ENCODE measurements at regions of chr1 and their contacts with region 1.

Region 1: GRCh38 chr1:167752219-167752985 is 30.6 kb downstream of the MPZL1 start:
- DNase-seq: no peak
- ATAC-seq: no peak
- H3K4me3 Mint-ChIP-seq: peak overlapping the region; percentile 77
- H3K27ac Mint-ChIP-seq: peak overlapping the region; percentile 84
- H3K4me1 Mint-ChIP-seq: peaks cover 80% of the 10 kb centered on the region
- H3K27me3 Mint-ChIP-seq: no peaks in the 10 kb centered on the region
- CTCF ChIP-seq: no peak

Region 2: DNA sequence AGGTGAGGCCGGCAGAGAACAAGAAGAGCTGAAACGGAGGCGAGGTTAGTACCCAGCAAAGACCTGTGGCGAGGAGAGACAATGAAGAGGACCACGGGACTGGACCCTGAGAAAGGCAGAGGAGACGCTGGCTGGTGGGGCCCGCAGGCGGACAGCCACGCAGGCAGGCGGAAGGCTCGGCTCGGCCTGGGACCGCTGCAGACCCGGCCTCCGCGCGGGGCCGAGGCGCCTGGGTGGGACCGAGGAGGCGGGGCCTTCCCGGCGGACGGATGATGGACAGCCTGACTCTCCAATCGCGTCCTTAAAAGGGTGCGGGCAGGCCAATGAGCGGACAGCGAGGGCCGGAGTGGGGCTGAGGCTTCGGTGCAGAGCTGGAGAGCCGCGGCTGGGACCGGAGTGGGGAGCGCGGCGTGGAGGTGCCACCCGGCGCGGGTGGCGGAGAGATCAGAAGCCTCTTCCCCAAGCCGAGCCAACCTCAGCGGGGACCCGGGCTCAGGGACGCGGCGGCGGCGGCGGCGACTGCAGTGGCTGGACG is 30.7 kb before region 1 on chr1 and contains the start of gene MPZL1:
- CTCF ChIA-PET with region 1: interaction called, 17 read pairs
- POLR2A ChIA-PET with region 1: interaction called, 8 read pairs
- intact Hi-C with region 1: loop called (anchors 1 kb)
- DNase-seq: peak; percentile 94
- ATAC-seq: peak; percentile 96
- H3K4me3 Mint-ChIP-seq: peak within 1 kb of the TSS; percentile 94
- H3K27ac Mint-ChIP-seq: peak within 1 kb of the TSS; percentile 96
- H3K4me1 Mint-ChIP-seq: peaks cover 77% of the 10 kb centered on the region
- H3K27me3 Mint-ChIP-seq: no peaks in the 10 kb centered on the region
- CTCF ChIP-seq: no peak
- total RNA-seq, gene MPZL1: 27.2 and 27.4 TPM in 2 replicates

Region 3: DNA sequence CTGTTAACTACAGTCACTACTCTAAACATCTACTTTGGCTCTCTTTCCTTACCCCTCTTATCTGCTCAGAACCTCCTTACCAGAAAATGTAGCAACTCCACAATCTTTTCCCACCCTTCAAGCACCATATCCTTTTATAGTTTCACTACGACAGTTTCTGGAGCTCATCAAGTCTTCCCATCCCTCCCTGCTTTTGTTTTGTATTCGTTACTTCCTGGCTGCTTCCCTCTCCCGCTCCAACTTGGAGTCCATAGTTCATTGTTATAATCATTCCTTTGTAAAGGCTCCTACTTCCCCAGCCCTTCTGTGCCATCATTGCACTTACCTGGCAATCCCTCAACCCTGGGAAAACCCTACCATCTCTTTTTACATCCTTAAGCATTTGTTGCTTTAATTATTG is 12.7 kb before region 1 on chr1:
- CTCF ChIA-PET with region 1: no interaction called
- POLR2A ChIA-PET with region 1: interaction called, 4 read pairs
- intact Hi-C with region 1: loop called (anchors 1 kb)
- DNase-seq: no peak
- ATAC-seq: no peak
- H3K4me3 Mint-ChIP-seq: no peak overlapping the region
- H3K27ac Mint-ChIP-seq: peak overlapping the region; percentile 19
- H3K4me1 Mint-ChIP-seq: peaks cover 26% of the 10 kb centered on the region
- H3K27me3 Mint-ChIP-seq: no peaks in the 10 kb centered on the region
- CTCF ChIP-seq: no peak

Region 4: DNA sequence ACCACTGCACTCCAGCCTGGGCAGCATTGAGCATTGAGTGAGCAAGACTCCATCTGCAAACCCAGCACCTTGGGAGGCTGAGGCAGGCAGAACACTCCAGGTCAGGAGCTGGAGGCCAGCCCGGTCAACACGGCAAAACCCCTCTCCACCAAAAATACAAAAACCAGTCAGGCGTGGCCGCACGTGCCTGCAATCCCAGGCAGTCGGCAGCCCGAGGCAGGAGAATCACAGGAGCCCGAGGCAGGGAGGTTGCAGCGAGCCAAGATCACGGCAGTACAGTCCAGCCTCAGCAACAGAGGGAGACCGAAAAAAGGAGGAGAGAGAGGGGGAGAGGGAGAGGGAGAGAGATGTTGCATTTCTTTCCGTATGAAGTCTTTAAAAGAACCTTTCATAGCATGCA is 19.4 kb after region 1 on chr1:
- CTCF ChIA-PET with region 1: interaction called, 4 read pairs
- POLR2A ChIA-PET with region 1: no interaction called
- intact Hi-C with region 1: loop called (anchors 2 kb)
- DNase-seq: no peak
- ATAC-seq: no peak
- H3K4me3 Mint-ChIP-seq: no peak overlapping the region
- H3K27ac Mint-ChIP-seq: no peak overlapping the region
- H3K4me1 Mint-ChIP-seq: no peaks in the 10 kb centered on the region
- H3K27me3 Mint-ChIP-seq: no peaks in the 10 kb centered on the region
- CTCF ChIP-seq: no peak